Naive thymus-derived CD4-positive, alpha-beta T cell (primary cell): ENCODE measurements at regions of chr13 and their contacts with region 1.

Region 1: DNA sequence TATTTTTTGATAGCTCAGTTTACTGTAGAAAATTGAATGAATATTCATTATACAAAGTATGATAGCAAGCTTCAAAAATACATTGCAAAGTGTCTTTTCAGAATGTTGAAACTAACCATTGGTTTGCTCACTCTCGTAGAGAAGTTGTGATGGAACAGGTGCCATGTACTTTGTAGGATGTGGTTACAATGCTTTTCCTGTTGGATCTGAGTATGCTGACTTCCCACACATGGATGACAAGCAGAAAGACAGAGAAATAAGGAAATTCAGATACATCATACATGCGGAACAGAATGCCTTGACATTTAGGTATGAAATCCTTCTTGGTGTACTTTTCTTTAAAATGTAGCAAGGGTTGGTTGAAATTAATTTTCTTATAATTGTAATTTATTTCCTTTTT is 30.5 kb downstream of the CDADC1 start:
- DNase-seq: no peak
- ATAC-seq: no peak
- H3K4me3 ChIP-seq: no peak overlapping the region
- H3K4me3 Mint-ChIP-seq: no peak overlapping the region
- H3K27ac ChIP-seq: no peak overlapping the region
- H3K27ac Mint-ChIP-seq: no peak overlapping the region
- H3K4me1 ChIP-seq: no peaks in the 10 kb centered on the region
- H3K4me1 Mint-ChIP-seq: no peaks in the 10 kb centered on the region
- H3K27me3 ChIP-seq: no peaks in the 10 kb centered on the region
- H3K27me3 Mint-ChIP-seq: no peaks in the 10 kb centered on the region

Region 2: GRCh38 chr13:48595431-48596429 is 682.5 kb before region 1 on chr13:
- CTCF ChIA-PET with region 1: no interaction called
- POLR2A ChIA-PET with region 1: no interaction called
- intact Hi-C with region 1: loop called in 1 of 2 experiments (anchors 5 kb)
- DNase-seq: peak in 8 of 9 donors; percentile 24 to 79 (median 60)
- ATAC-seq: peak; percentile 96
- H3K4me3 ChIP-seq: no peak overlapping the region
- H3K4me3 Mint-ChIP-seq: no peak overlapping the region
- H3K27ac ChIP-seq: no peak overlapping the region
- H3K27ac Mint-ChIP-seq: peak overlapping the region in 1 of 9 donors; percentile 10
- H3K4me1 ChIP-seq: no peaks in the 10 kb centered on the region
- H3K4me1 Mint-ChIP-seq: peaks cover 0 to 3% (median 0%) of the 10 kb centered on the region in 7 donors
- H3K27me3 ChIP-seq: no peaks in the 10 kb centered on the region
- H3K27me3 Mint-ChIP-seq: peaks cover 0 to 19% (median 0%) of the 10 kb centered on the region in 5 donors

Region 3: GRCh38 chr13:49098771-49099512 is 179.3 kb before region 1 on chr13:
- CTCF ChIA-PET with region 1: interaction called, 9 read pairs
- POLR2A ChIA-PET with region 1: no interaction called
- intact Hi-C with region 1: loop called (anchors 1 to 2 kb)
- DNase-seq: no peak
- ATAC-seq: no peak
- H3K4me3 ChIP-seq: no peak overlapping the region
- H3K4me3 Mint-ChIP-seq: no peak overlapping the region
- H3K27ac ChIP-seq: no peak overlapping the region
- H3K27ac Mint-ChIP-seq: peak overlapping the region in 1 of 9 donors; percentile 29
- H3K4me1 ChIP-seq: no peaks in the 10 kb centered on the region
- H3K4me1 Mint-ChIP-seq: peaks cover 4 to 34% (median 10%) of the 10 kb centered on the region in 7 donors
- H3K27me3 ChIP-seq: no peaks in the 10 kb centered on the region
- H3K27me3 Mint-ChIP-seq: no peaks in the 10 kb centered on the region

Region 4: DNA sequence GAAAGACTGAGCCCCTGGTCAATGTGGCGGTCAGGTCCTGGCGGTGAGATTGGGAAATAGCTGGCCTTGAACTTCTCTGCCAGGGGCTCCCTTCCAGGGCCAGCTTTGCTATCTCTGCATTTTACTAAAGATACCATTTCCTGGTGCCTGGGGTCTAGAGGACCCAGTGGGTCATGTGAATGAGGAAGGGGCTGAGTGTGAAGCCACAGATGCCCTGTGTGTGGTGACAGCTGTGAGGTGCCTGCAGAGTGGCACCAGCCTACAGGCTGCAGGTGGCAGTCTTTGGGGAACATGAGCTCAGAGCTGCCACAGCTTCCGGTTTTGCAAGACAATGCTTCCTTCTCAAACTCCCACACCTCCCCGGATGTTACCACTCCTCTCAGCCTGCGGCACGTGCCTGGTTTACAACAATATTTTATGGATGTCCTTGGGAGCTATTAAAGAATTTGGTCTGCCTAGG is 63.3 kb before region 1 on chr13:
- CTCF ChIA-PET with region 1: interaction called, 3 read pairs
- POLR2A ChIA-PET with region 1: no interaction called
- intact Hi-C with region 1: loop called in 1 of 2 experiments (anchors 1 kb)
- DNase-seq: peak in 7 of 9 donors; percentile 28 to 54 (median 49)
- ATAC-seq: peak; percentile 88
- H3K4me3 ChIP-seq: no peak overlapping the region
- H3K4me3 Mint-ChIP-seq: peak overlapping the region in 7 of 10 donors; percentile 5 to 62 (median 34)
- H3K27ac ChIP-seq: no peak overlapping the region
- H3K27ac Mint-ChIP-seq: peak overlapping the region in 6 of 9 donors; percentile 22 to 71 (median 57)
- H3K4me1 ChIP-seq: peaks cover 6 to 8% of the 10 kb centered on the region in 2 donors
- H3K4me1 Mint-ChIP-seq: peaks cover 16 to 27% (median 19%) of the 10 kb centered on the region in 7 donors
- H3K27me3 ChIP-seq: peaks cover 3 to 6% of the 10 kb centered on the region in 2 donors
- H3K27me3 Mint-ChIP-seq: peaks cover 30 to 35% (median 31%) of the 10 kb centered on the region in 5 donors

Region 5: GRCh38 chr13:49240017-49240416 is 38.2 kb before region 1 on chr13:
- CTCF ChIA-PET with region 1: interaction called, 24 read pairs
- POLR2A ChIA-PET with region 1: no interaction called
- intact Hi-C with region 1: loop called (anchors 1 kb)
- DNase-seq: peak in 5 of 9 donors; percentile 21 to 36 (median 33)
- ATAC-seq: peak; percentile 85
- H3K4me3 ChIP-seq: no peak overlapping the region
- H3K4me3 Mint-ChIP-seq: no peak overlapping the region
- H3K27ac ChIP-seq: no peak overlapping the region
- H3K27ac Mint-ChIP-seq: no peak overlapping the region
- H3K4me1 ChIP-seq: no peaks in the 10 kb centered on the region
- H3K4me1 Mint-ChIP-seq: peaks cover 0 to 2% (median 0%) of the 10 kb centered on the region in 7 donors
- H3K27me3 ChIP-seq: no peaks in the 10 kb centered on the region
- H3K27me3 Mint-ChIP-seq: peaks cover 0 to 41% (median 0%) of the 10 kb centered on the region in 5 donors

Region 6: GRCh38 chr13:49247643-49248621 is 30.3 kb before region 1 on chr13 and contains the start of gene CDADC1:
- CTCF ChIA-PET with region 1: interaction called, 8 read pairs
- POLR2A ChIA-PET with region 1: interaction called, 3 read pairs
- intact Hi-C with region 1: loop called (anchors 1 kb)
- DNase-seq: peak; percentile 44 to 93 (median 54)
- ATAC-seq: peak; percentile 90
- H3K4me3 ChIP-seq: peak within 1 kb of the TSS; percentile 93
- H3K4me3 Mint-ChIP-seq: peak within 1 kb of the TSS; percentile 94 to 99 (median 98)
- H3K27ac ChIP-seq: peak within 1 kb of the TSS; percentile 75
- H3K27ac Mint-ChIP-seq: peak within 1 kb of the TSS; percentile 92 to 97 (median 95)
- H3K4me1 ChIP-seq: peaks cover 1 to 3% of the 10 kb centered on the region in 2 donors
- H3K4me1 Mint-ChIP-seq: peaks cover 16 to 59% (median 53%) of the 10 kb centered on the region in 7 donors
- H3K27me3 ChIP-seq: no peaks in the 10 kb centered on the region
- H3K27me3 Mint-ChIP-seq: peaks cover 0 to 25% (median 0%) of the 10 kb centered on the region in 5 donors
- total RNA-seq, gene CDADC1: 10.7 to 21.3 (median 14.5) TPM